CD8-positive, alpha-beta T cell (primary cell): ENCODE measurements at regions of chr7 and their contacts with region 1.

Region 1: GRCh38 chr7:22001345-22002004 is 55.8 kb upstream of the CDCA7L start:
- DNase-seq: peak in 3 of 9 experiments; percentile 27 to 65 (median 57)
- ATAC-seq: peak; percentile 72
- H3K4me3 ChIP-seq: no peak overlapping the region
- H3K4me3 Mint-ChIP-seq: peak overlapping the region; percentile 23
- H3K27ac ChIP-seq: no peak overlapping the region
- H3K27ac Mint-ChIP-seq: no peak overlapping the region
- H3K4me1 ChIP-seq: no peaks in the 10 kb centered on the region
- H3K4me1 Mint-ChIP-seq: peaks cover 3% of the 10 kb centered on the region
- H3K27me3 ChIP-seq: no peaks in the 10 kb centered on the region
- H3K27me3 Mint-ChIP-seq: peaks cover 9% of the 10 kb centered on the region
- CTCF ChIP-seq: peak; percentile 86

Region 2: GRCh38 chr7:21526007-21526406 is 475.5 kb before region 1 on chr7:
- CTCF ChIA-PET with region 1: no interaction called
- POLR2A ChIA-PET with region 1: no interaction called
- intact Hi-C with region 1: loop called in 1 of 2 experiments (anchors 1 kb)
- DNase-seq: peak in 2 of 9 experiments; percentile 33 to 43
- ATAC-seq: no peak
- H3K4me3 ChIP-seq: no peak overlapping the region
- H3K4me3 Mint-ChIP-seq: no peak overlapping the region
- H3K27ac ChIP-seq: no peak overlapping the region
- H3K27ac Mint-ChIP-seq: no peak overlapping the region
- H3K4me1 ChIP-seq: no peaks in the 10 kb centered on the region
- H3K4me1 Mint-ChIP-seq: no peaks in the 10 kb centered on the region
- H3K27me3 ChIP-seq: no peaks in the 10 kb centered on the region
- H3K27me3 Mint-ChIP-seq: peaks cover 3% of the 10 kb centered on the region
- CTCF ChIP-seq: peak; percentile 22

Region 3: DNA sequence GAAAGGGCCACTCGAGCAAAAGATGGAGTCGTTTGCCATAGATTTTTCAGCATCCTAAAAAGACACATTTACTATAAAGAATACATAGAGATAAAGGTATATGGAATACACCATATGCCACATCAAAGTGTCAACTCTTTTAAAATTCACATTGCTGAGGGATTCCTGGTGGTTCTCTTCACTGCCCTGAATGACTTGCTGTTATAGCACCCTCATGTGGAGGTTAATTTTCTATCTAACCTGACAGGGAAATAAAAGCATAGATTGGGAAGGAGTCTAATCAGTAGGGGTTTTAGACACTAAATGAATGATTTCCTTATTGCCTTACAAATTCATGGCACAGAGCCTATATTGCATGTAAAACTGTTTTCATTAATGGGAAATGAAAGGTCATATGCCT is 432.7 kb before region 1 on chr7:
- CTCF ChIA-PET with region 1: interaction called, 4 read pairs
- POLR2A ChIA-PET with region 1: no interaction called
- intact Hi-C with region 1: loop called (anchors 5 kb)
- DNase-seq: peak in 2 of 9 experiments; percentile 6 to 36
- ATAC-seq: no peak
- H3K4me3 ChIP-seq: no peak overlapping the region
- H3K4me3 Mint-ChIP-seq: no peak overlapping the region
- H3K27ac ChIP-seq: no peak overlapping the region
- H3K27ac Mint-ChIP-seq: no peak overlapping the region
- H3K4me1 ChIP-seq: no peaks in the 10 kb centered on the region
- H3K4me1 Mint-ChIP-seq: no peaks in the 10 kb centered on the region
- H3K27me3 ChIP-seq: no peaks in the 10 kb centered on the region
- H3K27me3 Mint-ChIP-seq: no peaks in the 10 kb centered on the region
- CTCF ChIP-seq: peak; percentile 19

Region 4: DNA sequence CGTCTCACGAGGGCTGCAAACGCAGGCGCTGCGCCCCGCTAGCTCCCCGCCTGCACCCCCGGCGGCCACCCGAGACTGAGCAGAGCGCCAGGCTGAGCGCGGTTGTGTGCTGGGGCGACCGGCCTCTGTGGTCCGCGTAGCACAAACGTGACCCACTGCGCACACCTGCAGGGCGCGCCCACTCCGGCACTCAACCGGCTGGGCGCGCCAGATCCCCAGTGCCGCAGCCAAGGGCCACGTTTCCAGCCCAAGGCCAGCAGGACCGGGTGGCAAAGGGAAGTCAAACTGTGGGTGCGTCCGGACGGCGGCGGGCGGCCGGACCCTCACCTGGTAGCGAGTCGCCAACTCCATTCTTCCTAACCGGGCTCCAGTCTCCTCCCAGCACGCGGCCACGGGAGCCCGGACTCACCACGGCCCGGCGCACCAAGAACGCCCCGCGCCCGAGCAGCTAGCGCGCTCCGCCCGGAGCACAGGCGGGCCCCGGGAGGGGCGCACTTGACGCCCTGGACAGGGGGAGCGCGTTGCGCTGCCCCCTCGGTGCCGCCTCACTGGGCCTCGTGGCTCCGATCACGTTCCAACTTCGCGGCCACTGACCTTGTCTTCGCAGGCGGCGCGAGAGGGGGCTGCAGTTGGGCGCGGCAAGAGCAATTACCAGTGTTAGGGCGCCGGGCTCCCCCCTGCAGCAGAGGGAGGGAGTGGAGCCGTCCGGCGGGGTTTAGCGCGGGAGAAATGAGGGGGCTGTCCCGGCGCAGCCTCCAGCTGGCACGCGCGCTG is 55.8 kb before region 1 on chr7 and contains the start of gene CDCA7L:
- CTCF ChIA-PET with region 1: no interaction called
- POLR2A ChIA-PET with region 1: no interaction called
- intact Hi-C with region 1: loop called in 1 of 2 experiments (anchors 2 kb)
- DNase-seq: peak; percentile 6 to 73 (median 47)
- ATAC-seq: peak; percentile 80
- H3K4me3 ChIP-seq: peak within 1 kb of the TSS; percentile 62 to 72
- H3K4me3 Mint-ChIP-seq: peak within 1 kb of the TSS; percentile 88
- H3K27ac ChIP-seq: peak within 1 kb of the TSS in 1 of 2 experiments; percentile 38
- H3K27ac Mint-ChIP-seq: peak within 1 kb of the TSS; percentile 63
- H3K4me1 ChIP-seq: peaks cover 15% of the 10 kb centered on the region
- H3K4me1 Mint-ChIP-seq: peaks cover 55% of the 10 kb centered on the region
- H3K27me3 ChIP-seq: peaks cover 0 to 2% of the 10 kb centered on the region in 2 experiments
- H3K27me3 Mint-ChIP-seq: peaks cover 3% of the 10 kb centered on the region
- CTCF ChIP-seq: no peak
- total RNA-seq, gene CDCA7L: 18.4 to 24.7 TPM

Region 5: GRCh38 chr7:22013711-22014110 is 12.2 kb after region 1 on chr7:
- CTCF ChIA-PET with region 1: interaction called, 11 read pairs
- POLR2A ChIA-PET with region 1: no interaction called
- intact Hi-C with region 1: no loop called
- DNase-seq: no peak
- ATAC-seq: no peak
- H3K4me3 ChIP-seq: no peak overlapping the region
- H3K4me3 Mint-ChIP-seq: no peak overlapping the region
- H3K27ac ChIP-seq: no peak overlapping the region
- H3K27ac Mint-ChIP-seq: no peak overlapping the region
- H3K4me1 ChIP-seq: no peaks in the 10 kb centered on the region
- H3K4me1 Mint-ChIP-seq: no peaks in the 10 kb centered on the region
- H3K27me3 ChIP-seq: no peaks in the 10 kb centered on the region
- H3K27me3 Mint-ChIP-seq: peaks cover 5% of the 10 kb centered on the region
- CTCF ChIP-seq: no peak